ENCODE measurements at regions of chr15 and their contacts with region 1.

Region 1: DNA sequence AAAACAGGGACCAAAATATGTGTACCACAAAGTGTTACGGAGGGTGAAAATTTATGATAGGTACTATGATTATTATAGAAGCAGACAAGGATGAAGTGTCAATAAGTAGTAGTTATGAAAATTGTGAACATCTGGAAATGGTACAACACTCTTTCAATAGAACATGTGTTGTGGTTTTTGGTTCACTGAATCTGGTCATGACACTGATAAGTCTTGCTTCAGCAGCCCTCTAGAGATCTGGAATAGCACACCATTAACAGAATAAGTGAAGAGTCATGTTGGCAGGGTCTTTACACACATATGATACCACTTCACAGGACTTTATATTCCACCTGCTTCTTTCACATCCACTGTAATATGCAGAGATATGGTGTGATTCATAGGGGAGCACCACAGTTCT is 985.2 kb upstream of the SEMA6D start:
- DNase-seq: no peak
- H3K4me3 ChIP-seq: no peak overlapping the region
- H3K27ac ChIP-seq: no peak overlapping the region
- H3K4me1 ChIP-seq: no peaks in the 10 kb centered on the region
- H3K27me3 ChIP-seq: no peaks in the 10 kb centered on the region
- CTCF ChIP-seq: no peak
- POLR2A ChIP-seq: no peak

Region 2: GRCh38 chr15:46442184-46442583 is 289.9 kb before region 1 on chr15:
- CTCF ChIA-PET with region 1: no interaction called
- POLR2A ChIA-PET with region 1: no interaction called
- dilution Hi-C with region 1: no loop called
- intact Hi-C with region 1: no loop called
- DNase-seq: no peak
- H3K4me3 ChIP-seq: no peak overlapping the region
- H3K27ac ChIP-seq: no peak overlapping the region
- H3K4me1 ChIP-seq: no peaks in the 10 kb centered on the region
- H3K27me3 ChIP-seq: no peaks in the 10 kb centered on the region
- CTCF ChIP-seq: no peak
- POLR2A ChIP-seq: no peak

Region 3: DNA sequence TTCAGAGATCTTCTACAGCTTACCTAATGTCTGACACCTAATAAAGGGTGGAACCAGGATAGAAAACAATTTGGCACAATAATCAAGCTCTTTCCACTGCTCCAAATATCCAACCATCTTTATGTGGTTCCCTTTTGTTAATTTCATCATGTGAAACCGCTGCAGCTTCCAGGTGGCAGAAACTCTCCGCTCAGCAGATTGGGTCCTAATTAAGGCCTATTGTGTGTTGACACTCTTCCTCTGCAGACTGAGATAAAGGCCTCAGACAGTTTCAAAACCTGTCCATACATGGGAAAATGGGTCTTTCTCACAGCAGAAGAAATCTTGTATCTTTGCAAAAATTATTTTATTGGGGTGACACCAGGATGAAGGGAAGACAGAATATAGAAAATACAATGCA is 17.1 kb before region 1 on chr15:
- CTCF ChIA-PET with region 1: no interaction called
- POLR2A ChIA-PET with region 1: no interaction called
- dilution Hi-C with region 1: no loop called
- intact Hi-C with region 1: loop called (anchors 1 kb)
- DNase-seq: no peak
- H3K4me3 ChIP-seq: no peak overlapping the region
- H3K27ac ChIP-seq: no peak overlapping the region
- H3K4me1 ChIP-seq: no peaks in the 10 kb centered on the region
- H3K27me3 ChIP-seq: no peaks in the 10 kb centered on the region
- CTCF ChIP-seq: no peak
- POLR2A ChIP-seq: no peak

Measured in endothelial cell of umbilical vein (primary cell).